ENCODE measurements at regions of chr7 and their contacts with region 1.

Region 1: GRCh38 chr7:148884299-148885022 is 370 bp upstream of the EZH2 start:
- DNase-seq: peak; percentile 95
- ATAC-seq: peak; percentile 93
- H3K4me3 Mint-ChIP-seq: peak overlapping the region; percentile 92
- H3K27ac Mint-ChIP-seq: peak overlapping the region; percentile 99
- H3K4me1 Mint-ChIP-seq: peaks cover 36% of the 10 kb centered on the region
- H3K27me3 Mint-ChIP-seq: no peaks in the 10 kb centered on the region

Region 2: GRCh38 chr7:148856891-148857290 is 27.6 kb before region 1 on chr7:
- CTCF ChIA-PET with region 1: interaction called, 10 read pairs
- POLR2A ChIA-PET with region 1: interaction called, 4 read pairs
- DNase-seq: no peak
- ATAC-seq: peak; percentile 5
- H3K4me3 Mint-ChIP-seq: no peak overlapping the region
- H3K27ac Mint-ChIP-seq: no peak overlapping the region
- H3K4me1 Mint-ChIP-seq: peaks cover 35% of the 10 kb centered on the region
- H3K27me3 Mint-ChIP-seq: no peaks in the 10 kb centered on the region

Region 3: GRCh38 chr7:148872188-148872587 is 12.3 kb before region 1 on chr7:
- CTCF ChIA-PET with region 1: interaction called, 5 read pairs
- POLR2A ChIA-PET with region 1: interaction called, 15 read pairs
- DNase-seq: no peak
- ATAC-seq: no peak
- H3K4me3 Mint-ChIP-seq: no peak overlapping the region
- H3K27ac Mint-ChIP-seq: no peak overlapping the region
- H3K4me1 Mint-ChIP-seq: peaks cover 62% of the 10 kb centered on the region
- H3K27me3 Mint-ChIP-seq: no peaks in the 10 kb centered on the region

Region 4: DNA sequence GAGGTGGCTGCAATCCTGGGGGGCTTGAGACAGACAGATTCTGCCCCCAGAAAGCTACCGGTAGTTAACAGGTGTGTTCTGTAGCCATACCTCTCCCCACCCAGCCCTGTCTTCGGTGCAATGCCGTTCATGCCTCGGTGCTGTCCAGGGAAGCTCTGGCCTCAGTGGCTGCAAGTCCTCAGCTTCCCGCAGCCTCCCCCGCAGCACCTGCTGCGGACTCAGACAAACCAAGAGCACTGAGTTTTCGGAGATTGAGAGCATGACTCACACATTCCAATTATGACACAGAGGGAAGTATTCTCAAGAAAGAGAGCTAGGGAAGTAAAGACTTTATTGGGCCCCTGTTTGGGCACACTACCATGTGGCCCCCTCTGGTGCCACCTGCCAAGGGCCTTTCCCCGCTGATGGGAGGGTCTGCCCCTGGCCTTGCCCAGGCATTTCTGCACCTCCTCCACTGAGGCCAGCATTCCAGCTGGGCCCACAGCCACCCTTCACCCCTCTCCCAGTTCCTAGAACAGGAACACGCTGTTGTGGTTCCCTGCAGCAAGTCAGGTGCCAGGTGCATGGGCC is 29.8 kb after region 1 on chr7:
- CTCF ChIA-PET with region 1: interaction called, 6 read pairs
- POLR2A ChIA-PET with region 1: interaction called, 59 read pairs
- DNase-seq: peak; percentile 49
- ATAC-seq: peak; percentile 35
- H3K4me3 Mint-ChIP-seq: no peak overlapping the region
- H3K27ac Mint-ChIP-seq: peak overlapping the region; percentile 89
- H3K4me1 Mint-ChIP-seq: peaks cover 55% of the 10 kb centered on the region
- H3K27me3 Mint-ChIP-seq: no peaks in the 10 kb centered on the region

Measured in activated CD8-positive, alpha-beta T cell treated with anti-CD3 and anti-CD28 coated beads, Interleukin-2, amount 10 ng/mL, durations not matched to agents 7 days and 5 days (primary cell).